Caco-2 (cell line): ENCODE measurements at regions of chr9 and their contacts with region 1.

Region 1: DNA sequence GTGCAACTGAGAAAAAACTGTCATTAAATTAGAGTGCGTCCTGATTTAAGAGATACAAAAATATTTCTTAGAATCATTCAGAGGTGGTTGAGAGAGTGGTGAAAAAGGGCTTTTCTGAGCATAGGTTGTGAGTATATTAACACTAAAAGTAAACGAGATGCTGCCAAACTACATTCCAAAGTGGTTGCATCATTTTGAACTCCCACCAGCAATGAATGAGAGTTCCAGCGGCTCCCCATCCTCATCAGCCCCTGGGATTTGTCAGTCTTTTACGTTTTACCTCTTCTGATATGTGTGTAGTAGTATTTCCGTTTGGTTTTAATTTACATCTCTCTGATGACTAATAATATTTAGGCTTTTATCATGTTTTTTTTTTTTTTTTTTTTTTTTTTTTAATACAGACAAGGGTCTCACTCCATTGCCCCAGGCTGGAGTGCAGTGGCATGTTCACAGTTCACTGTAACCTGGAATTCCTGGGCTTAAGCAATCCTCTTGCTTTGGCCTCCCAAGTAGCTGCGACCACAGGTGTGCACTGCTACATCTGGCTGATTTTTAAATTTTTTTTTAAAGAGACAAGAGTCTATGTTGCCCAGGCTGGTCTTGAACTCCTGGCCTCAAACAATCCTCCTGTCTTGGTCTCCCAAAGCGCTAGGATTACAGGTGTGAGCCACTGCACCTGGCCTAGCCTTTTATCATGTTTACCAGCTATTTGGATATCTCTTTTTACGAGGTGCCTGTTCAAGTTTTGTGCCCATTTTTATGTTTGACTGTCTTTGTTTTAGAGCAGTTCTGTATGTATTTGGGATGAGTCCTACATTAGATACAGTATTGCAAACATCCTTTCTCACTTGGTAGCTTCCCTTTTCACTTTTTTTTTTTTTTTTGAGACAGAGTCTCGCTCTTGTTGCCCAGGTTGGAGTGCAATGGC is 17.0 kb downstream of the PRRT1B start:
- DNase-seq: peak; percentile 62 to 70
- H3K4me3 ChIP-seq: no peak overlapping the region
- H3K4me3 Mint-ChIP-seq: peak overlapping the region; percentile 68
- H3K27ac Mint-ChIP-seq: peak overlapping the region; percentile 90
- H3K4me1 ChIP-seq: peaks cover 14% of the 10 kb centered on the region
- H3K4me1 Mint-ChIP-seq: peaks cover 11% of the 10 kb centered on the region
- H3K27me3 ChIP-seq: no peaks in the 10 kb centered on the region
- H3K27me3 Mint-ChIP-seq: no peaks in the 10 kb centered on the region
- CTCF ChIP-seq: no peak

Region 2: GRCh38 chr9:131502781-131503625 is 59.3 kb before region 1 on chr9 and contains the start of gene POMT1:
- CTCF ChIA-PET with region 1: no interaction called
- POLR2A ChIA-PET with region 1: no interaction called
- intact Hi-C with region 1: loop called (anchors 10 kb)
- DNase-seq: peak; percentile 90 to 93
- H3K4me3 ChIP-seq: peak within 1 kb of the TSS; percentile 89
- H3K4me3 Mint-ChIP-seq: peak within 1 kb of the TSS; percentile 90
- H3K27ac Mint-ChIP-seq: peak within 1 kb of the TSS; percentile 81
- H3K4me1 ChIP-seq: 0 out of 2 replicates have a peak, but pooled peaks cover 6% of the 10 kb centered on the region
- H3K4me1 Mint-ChIP-seq: peaks cover 16% of the 10 kb centered on the region
- H3K27me3 ChIP-seq: no peaks in the 10 kb centered on the region
- H3K27me3 Mint-ChIP-seq: no peaks in the 10 kb centered on the region
- CTCF ChIP-seq: no peak
- total RNA-seq, gene POMT1: 44.2 and 44.7 TPM in 2 replicates

Region 3: DNA sequence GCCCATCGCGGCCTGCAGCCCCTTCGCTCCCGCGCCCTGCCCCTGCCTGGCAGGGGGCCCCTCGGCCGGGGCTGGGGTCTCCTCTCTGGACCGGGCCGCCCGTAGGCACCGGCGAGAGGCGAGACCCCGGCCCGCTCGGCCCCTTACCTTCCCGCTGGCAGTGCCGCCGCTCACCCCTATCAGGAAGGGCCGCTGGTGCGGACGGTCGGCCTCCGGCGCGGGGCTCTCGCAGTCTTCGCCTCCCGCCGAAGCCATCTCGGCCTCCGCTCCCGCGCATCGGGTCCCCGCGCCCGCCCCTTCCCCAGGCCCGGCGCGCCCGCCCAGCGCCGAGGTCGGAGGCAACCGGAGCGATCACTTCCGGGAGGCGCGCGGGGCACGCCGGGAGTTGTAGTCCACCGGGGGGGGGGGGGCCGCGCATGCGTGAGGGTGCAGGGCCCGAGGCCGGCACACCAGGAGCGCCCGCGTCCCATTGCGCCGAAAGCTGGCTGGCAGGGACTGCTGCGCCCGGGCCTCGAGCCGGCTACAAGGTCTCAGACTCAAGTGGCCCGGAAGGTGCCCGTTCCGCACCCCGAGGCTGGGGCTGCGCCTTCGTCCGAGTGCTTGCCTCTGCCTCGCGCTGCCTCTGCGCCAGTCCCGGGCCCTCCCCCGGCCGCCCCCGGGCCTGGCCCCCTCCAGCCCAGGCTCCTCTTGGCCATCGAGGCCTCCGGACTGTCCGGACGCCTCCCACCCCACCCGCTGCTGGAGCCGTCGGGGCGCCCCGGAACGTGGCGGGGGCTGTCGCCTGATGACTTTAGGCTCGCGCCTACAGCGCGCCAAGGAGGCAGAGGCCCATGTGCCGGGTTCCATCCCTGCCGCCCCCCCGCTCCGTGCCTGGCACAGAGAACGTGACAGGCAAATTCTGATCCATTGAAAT is 31.1 kb before region 1 on chr9 and contains the start of gene UCK1:
- CTCF ChIA-PET with region 1: no interaction called
- POLR2A ChIA-PET with region 1: no interaction called
- intact Hi-C with region 1: no loop called
- DNase-seq: peak; percentile 76 to 84
- H3K4me3 ChIP-seq: peak within 1 kb of the TSS; percentile 86
- H3K4me3 Mint-ChIP-seq: peak within 1 kb of the TSS; percentile 82
- H3K27ac Mint-ChIP-seq: no peak within 1 kb of the TSS
- H3K4me1 ChIP-seq: peaks cover 11% of the 10 kb centered on the region; the same call in 1 of the 2 replicates
- H3K4me1 Mint-ChIP-seq: no peaks in the 10 kb centered on the region
- H3K27me3 ChIP-seq: no peaks in the 10 kb centered on the region
- H3K27me3 Mint-ChIP-seq: no peaks in the 10 kb centered on the region
- CTCF ChIP-seq: no peak
- total RNA-seq, gene UCK1: 24.9 and 25.7 TPM in 2 replicates